ENCODE measurements at regions of chr11 and their contacts with region 1.

Region 1: GRCh38 chr11:45859661-45860140 is 12.4 kb downstream of the CRY2 start:
- DNase-seq: no peak
- ATAC-seq: no peak
- H3K4me3 ChIP-seq: no peak overlapping the region
- H3K4me3 Mint-ChIP-seq: no peak overlapping the region
- H3K27ac ChIP-seq: no peak overlapping the region
- H3K27ac Mint-ChIP-seq: no peak overlapping the region
- H3K4me1 ChIP-seq: no peaks in the 10 kb centered on the region
- H3K4me1 Mint-ChIP-seq: peaks cover 6% of the 10 kb centered on the region
- H3K27me3 ChIP-seq: no peaks in the 10 kb centered on the region
- H3K27me3 Mint-ChIP-seq: no peaks in the 10 kb centered on the region
- CTCF ChIP-seq: no peak

Region 2: DNA sequence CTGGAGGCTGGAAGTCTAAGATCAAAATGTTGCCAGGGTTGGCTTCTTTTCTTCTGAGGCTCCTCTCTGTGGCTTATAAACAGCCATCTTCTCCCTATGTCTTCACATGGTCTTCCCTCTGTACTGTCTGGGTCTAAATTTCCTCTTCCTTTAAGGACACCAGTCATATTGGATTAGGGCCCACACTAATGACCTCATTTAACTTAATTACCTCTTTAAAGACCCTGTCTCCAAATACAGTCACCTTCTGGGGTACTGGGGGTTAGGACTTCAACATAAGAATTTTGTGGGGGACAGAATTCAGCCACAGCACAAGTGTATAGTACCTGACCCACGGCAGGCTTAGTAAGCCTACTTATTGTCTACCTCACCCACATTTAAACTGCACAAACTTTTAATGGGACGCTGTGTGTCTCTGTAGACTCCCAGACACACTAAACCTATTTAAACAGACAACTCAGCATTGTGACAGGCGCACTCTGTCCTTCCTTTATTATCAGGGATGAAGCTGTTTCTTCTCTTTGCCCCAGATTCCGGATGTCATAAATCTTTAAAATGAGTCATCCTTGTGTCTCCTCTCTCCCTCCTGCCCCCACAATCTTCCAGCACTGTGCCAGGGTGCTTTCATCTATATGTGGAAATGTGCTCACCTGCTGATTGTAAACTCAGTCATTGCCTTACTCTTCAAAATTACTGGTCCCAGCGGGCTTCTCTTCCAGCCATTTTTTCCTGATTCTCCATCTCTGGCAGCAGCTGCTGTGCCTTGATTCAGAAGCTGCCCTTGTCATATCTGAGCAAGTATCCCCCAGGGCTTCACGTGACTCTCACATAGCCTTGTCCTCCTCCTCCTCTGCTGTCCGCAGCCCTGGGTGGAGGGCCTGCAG is 20.3 kb after region 1 on chr11:
- CTCF ChIA-PET with region 1: no interaction called
- POLR2A ChIA-PET with region 1: interaction called, 3 read pairs
- intact Hi-C with region 1: loop called in 1 of 2 experiments (anchors 2 kb)
- DNase-seq: no peak
- ATAC-seq: no peak
- H3K4me3 ChIP-seq: no peak overlapping the region
- H3K4me3 Mint-ChIP-seq: no peak overlapping the region
- H3K27ac ChIP-seq: no peak overlapping the region
- H3K27ac Mint-ChIP-seq: no peak overlapping the region
- H3K4me1 ChIP-seq: peaks cover 3% of the 10 kb centered on the region
- H3K4me1 Mint-ChIP-seq: peaks cover 7% of the 10 kb centered on the region
- H3K27me3 ChIP-seq: peaks cover 0 to under 1% of the 10 kb centered on the region in 2 experiments
- H3K27me3 Mint-ChIP-seq: no peaks in the 10 kb centered on the region
- CTCF ChIP-seq: no peak